PC-9 (cell line): ENCODE measurements at regions of chr7 and their contacts with region 1.

Region 1: DNA sequence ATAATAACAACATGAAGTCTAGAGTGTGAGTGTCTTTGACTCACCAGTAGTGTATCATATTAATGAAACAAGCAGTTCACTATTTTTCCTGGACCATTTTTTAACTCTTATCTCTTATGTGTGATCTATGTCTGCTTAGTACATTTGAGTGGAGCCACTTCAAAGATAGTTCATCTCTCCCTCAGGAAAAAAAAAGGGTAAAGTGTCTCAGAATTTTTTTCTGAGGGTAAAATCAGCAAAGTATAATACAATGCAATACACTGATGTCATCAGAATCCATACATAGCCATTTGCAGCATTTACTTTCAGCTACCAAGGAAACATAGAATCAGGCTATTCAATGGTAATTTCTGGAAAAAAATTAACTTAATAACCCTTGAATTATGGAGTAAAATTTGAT is 706.7 kb downstream of the DNAJB9 start:
- DNase-seq: no peak
- H3K4me3 ChIP-seq: no peak overlapping the region
- H3K27ac ChIP-seq: no peak overlapping the region
- H3K4me1 ChIP-seq: no peaks in the 10 kb centered on the region
- H3K27me3 ChIP-seq: no peaks in the 10 kb centered on the region
- CTCF ChIP-seq: no peak

Region 2: DNA sequence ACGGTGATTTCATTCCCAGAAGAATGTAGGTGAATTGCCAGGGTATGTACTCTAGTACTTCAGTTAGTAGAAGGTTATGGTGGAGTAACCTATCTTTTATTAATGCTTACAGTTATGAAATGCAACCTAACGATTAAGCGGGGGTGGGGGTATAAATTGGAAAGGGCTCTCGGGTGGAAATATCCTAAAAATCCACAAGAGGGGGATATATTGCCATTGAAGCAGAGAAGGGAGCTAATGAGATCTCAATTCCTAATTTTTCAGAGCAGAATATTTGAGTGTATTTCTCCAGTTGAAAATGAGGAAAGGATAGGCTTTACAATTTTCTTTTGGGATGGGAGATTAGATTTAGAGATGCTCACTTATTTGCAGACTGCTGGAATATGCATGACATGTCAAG is 615.9 kb before region 1 on chr7:
- CTCF ChIA-PET with region 1: no interaction called
- POLR2A ChIA-PET with region 1: interaction called, 16 read pairs
- intact Hi-C with region 1: no loop called
- DNase-seq: no peak
- H3K4me3 ChIP-seq: no peak overlapping the region
- H3K27ac ChIP-seq: no peak overlapping the region
- H3K4me1 ChIP-seq: no peaks in the 10 kb centered on the region
- H3K27me3 ChIP-seq: no peaks in the 10 kb centered on the region
- CTCF ChIP-seq: peak; percentile 60

Region 3: DNA sequence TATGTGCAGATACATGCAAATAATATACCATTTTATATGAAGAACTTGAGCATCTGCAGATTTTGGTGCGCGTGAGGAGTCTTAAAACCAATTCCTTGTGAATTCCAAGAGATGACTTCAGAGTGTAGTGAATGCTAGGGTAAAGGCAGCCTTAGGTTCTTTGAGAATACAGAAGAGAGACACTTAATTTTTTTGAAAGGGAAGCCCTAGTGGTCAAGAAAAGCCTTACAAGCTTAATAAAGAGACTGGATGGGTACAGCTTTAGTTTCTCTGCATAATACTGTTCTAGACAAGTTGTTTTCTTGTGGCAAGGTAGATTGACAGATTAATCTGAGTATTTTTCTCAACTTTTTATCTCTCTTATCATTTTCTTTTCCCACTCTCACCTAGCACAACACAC is 70.2 kb before region 1 on chr7:
- CTCF ChIA-PET with region 1: no interaction called
- POLR2A ChIA-PET with region 1: no interaction called
- intact Hi-C with region 1: no loop called
- DNase-seq: no peak
- H3K4me3 ChIP-seq: no peak overlapping the region
- H3K27ac ChIP-seq: no peak overlapping the region
- H3K4me1 ChIP-seq: no peaks in the 10 kb centered on the region
- H3K27me3 ChIP-seq: no peaks in the 10 kb centered on the region
- CTCF ChIP-seq: 0 out of 2 replicates have a peak, but pooled peaks have one; percentile 33